Activated CD4-positive, alpha-beta T cell treated with anti-CD3 and anti-CD28 coated beads, Interleukin-2, amount 10 ng/mL, durations not matched to agents 24 days and 14 days (primary cell): ENCODE measurements at regions of chr1 and their contacts with region 1.

Region 1: DNA sequence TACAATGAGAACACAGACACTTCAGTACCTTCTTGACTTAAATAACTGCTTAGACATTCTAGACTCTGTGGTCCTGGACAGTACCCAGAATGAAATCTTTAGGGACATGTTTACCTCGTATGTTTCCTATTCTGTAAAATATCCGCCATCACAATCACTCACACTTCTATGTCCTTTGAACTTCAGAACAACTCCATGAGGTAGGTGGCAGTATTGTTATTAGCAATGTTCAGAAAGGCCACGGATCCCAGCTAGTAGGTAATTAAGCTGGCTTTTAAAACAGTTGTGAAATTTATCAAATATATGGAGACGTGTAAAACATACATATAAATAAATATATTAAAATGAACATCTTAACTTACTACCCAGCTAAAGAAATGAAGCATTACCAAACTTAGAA is 83.4 kb downstream of the CACHD1 start:
- DNase-seq: no peak
- H3K4me3 Mint-ChIP-seq: no peak overlapping the region
- H3K27ac Mint-ChIP-seq: no peak overlapping the region
- H3K4me1 Mint-ChIP-seq: peaks cover 15% of the 10 kb centered on the region
- H3K27me3 Mint-ChIP-seq: peaks cover 41% of the 10 kb centered on the region

Region 2: DNA sequence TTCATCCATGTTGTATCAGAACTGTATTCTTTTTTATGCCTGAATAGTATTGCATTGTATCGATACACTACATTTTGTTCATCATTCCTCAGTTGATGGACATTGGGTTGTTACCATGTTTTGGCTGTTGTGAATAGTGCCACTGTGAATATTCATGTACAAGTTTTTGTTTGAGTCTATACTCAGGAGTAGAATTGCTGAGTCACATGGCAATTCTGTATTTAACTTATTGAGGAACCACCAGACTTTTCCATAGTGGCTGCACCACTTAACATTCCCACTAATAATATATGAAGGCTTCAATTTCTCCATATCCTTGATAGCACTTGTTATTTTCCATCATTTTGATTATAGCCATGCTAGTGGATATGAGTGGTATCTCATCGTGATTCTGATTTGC is 1129.6 kb before region 1 on chr1:
- intact Hi-C with region 1: no loop called
- DNase-seq: no peak
- H3K4me3 Mint-ChIP-seq: no peak overlapping the region
- H3K27ac Mint-ChIP-seq: no peak overlapping the region
- H3K4me1 Mint-ChIP-seq: no peaks in the 10 kb centered on the region
- H3K27me3 Mint-ChIP-seq: no peaks in the 10 kb centered on the region

Region 3: DNA sequence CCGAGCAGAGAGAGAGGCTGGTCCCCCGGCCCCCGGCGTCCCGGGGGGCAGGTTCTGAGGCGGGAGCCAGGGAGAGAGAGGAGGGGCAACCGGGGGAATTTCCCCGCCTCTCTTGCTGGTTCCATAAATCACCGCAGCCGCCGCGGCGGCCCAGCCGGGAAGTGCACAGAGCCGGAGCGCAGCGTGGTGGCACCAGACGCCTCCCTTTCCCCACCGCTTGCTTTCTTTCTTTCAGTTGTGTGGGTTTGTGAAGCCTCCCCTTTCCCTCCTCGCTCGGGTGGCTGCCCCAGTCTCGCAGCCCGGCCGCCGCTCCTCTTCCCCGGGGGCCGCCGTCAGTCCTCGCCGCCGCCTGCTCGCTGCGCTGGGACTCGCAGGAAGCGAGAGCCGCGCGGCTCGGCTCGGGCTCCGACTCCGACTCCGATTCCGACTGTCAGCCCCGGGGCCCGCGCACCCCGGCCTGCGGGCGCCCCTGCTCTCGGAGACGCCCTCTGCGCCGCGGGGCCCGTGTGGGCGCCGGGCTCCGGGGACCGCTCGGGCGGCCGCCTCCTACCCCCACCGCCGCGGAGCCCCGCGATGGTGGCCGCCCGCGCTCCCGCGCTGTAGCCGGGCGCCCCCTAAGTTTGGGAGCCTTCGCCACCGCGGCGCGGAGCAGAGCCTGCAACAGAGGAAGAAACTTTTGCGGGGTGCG is 83.2 kb before region 1 on chr1 and contains the start of gene CACHD1:
- intact Hi-C with region 1: loop called (anchors 5 kb)
- DNase-seq: peak; percentile 84
- H3K4me3 Mint-ChIP-seq: peak within 1 kb of the TSS; percentile 72
- H3K27ac Mint-ChIP-seq: no peak within 1 kb of the TSS
- H3K4me1 Mint-ChIP-seq: peaks cover 8% of the 10 kb centered on the region
- H3K27me3 Mint-ChIP-seq: peaks cover 66% of the 10 kb centered on the region
- total RNA-seq, gene CACHD1: 0.14 and 0.23 TPM in 2 replicates